Left colon (tissue), 2 donors: ENCODE measurements at regions of chr7 and their contacts with region 1.

Region 1: DNA sequence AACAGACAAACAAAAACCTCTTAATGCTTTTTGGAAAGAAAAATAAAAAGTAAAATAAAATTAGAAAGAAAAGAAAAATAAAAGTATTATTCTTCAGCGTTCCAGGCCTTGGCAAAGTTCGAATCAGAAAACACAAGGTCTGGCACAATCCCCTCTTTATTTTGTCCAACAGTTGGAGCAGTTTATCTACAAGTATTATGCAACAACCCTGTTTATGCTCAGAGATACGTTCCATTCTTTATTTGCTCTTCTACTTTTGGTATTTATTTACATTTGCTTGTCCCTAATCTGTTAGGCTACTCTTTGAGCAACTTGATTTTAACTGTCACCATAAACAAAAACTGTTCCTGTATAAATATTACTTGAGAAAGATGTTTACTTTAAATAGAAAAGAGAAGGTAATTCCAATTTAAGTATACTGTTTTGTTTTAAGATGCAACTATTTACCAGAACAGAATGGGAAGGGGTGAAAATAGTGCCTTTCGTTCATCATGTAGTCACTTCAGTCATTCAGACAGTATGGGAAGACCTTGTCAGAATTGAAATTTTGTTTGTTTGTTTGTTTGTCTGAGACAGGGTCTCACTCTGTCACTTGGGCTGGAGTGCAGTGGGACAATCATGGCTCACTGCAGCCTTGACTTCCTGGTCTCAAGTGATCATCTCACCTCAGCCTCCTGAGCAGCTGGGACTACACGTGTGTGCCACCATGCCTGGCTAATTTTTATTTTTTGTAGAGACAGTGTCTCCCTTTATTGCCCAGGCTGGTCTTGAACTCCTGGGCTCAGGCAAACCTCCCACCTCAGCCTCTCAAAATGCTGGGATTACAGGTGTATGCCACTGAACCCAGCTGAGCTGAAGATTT is 5.7 kb downstream of the PDK4 start:
- DNase-seq: no peak
- ATAC-seq: no peak

Region 2: DNA sequence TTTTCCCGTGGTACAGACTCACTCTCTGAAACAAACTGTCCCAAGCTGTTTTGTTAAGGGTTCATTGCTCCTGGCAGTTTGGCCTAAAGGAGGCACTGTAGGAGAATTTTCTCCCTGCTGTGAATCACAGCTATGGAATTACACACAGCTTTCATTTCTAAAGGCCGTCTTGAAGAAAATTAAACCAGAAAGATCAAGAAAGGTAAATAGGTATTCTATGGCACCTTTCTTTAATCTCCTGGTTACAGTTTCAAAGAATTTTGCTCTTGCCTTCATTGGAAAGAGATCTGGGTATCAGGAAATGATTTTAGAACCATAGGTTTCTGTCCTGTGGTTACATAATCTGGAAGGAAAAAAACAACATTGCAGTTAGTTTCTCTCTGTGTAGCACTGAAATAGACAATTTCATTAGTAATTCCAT is 45.5 kb before region 1 on chr7:
- intact Hi-C with region 1: loop called in 1 of 2 experiments (anchors 5 kb)
- DNase-seq: peak; percentile 34 to 46
- ATAC-seq: peak; percentile 97